Activated CD8-positive, alpha-beta T cell treated with anti-CD3 and anti-CD28 coated beads, Interleukin-2, amount 10 ng/mL, durations not matched to agents 7 days and 5 days (primary cell): ENCODE measurements at regions of chr20 and their contacts with region 1.

Region 1: DNA sequence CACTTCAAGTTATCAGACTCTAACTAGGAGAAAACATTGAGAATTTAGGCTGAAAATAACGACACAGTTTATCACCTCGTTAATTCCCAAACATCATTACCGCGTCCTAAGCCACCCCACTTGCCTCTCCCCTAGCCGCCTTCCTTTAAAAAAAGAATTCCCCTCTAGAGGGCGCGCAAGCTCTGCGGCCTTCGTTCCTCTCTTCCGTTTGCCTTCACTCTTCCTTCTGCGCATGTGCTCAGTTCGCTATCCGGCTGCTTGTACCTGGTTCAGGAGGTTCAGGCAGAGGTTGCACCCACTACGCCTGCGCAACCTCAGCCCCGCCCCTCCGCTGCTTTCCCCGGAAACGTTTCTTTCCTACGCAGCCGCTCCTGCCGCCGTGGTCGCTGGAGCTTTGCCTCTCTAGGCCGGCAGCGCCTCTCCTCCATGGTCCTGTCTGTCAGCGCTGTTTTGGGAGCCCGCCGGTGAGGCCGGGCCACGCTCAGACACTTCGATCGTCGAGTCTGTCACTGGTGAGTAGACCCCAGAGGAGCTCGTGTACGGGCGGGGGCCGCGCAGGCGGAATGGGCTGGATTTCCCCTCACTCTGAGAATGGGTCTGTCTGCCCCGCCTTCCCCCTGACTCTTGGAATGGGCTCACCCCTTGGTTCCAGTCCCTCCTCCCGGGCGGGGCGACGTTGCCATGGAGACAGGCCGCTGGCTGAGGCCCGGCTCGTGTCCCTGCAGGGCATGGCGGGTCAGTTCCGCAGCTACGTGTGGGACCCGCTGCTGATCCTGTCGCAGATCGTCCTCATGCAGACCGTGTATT is at the start of gene SYS1:
- DNase-seq: peak; percentile 99
- ATAC-seq: peak; percentile 91
- H3K4me3 Mint-ChIP-seq: peak within 1 kb of the TSS; percentile 97
- H3K27ac Mint-ChIP-seq: peak within 1 kb of the TSS; percentile 93
- H3K4me1 Mint-ChIP-seq: peaks cover 61% of the 10 kb centered on the region
- H3K27me3 Mint-ChIP-seq: no peaks in the 10 kb centered on the region
- total RNA-seq, gene SYS1: 28.0 to 30.8 TPM

Region 2: DNA sequence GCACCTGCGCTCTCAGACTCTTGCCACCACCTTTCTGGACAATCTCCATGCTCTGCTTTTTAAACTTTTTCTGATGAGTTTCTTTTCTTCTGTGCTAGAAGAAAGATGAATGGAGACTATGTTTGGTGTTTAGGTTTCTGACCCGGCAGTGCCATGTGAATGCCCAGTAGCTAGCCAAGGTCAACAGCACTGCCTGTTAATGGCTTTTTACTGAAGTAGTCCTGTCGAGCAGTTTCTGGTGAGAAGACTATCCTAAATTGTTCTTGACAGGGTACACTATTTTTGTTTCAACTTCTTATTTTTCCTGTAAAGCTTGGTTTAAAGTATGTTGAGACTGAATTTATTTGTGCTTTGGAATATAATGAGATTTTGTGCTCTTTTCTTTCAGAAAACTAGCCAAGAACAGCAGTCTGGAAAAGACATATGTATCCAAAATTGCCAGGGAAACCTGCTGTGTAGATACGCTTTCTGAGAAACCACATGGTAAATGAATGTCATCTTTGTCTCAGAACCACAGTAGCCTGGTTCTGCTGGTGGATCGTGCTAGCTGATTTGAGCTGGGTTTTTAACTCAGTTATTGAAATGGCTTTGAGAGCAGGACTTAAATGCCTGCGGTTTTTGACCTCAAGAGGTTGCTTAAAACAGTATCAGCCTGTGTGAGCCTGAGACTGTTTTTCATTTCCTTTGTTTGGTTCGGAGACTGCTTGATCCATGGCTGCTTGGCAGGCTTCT is 310.1 kb before region 1 on chr20:
- CTCF ChIA-PET with region 1: no interaction called
- POLR2A ChIA-PET with region 1: no interaction called
- DNase-seq: peak; percentile 54
- ATAC-seq: peak; percentile 80
- H3K4me3 Mint-ChIP-seq: peak overlapping the region; percentile 27
- H3K27ac Mint-ChIP-seq: peak overlapping the region; percentile 53
- H3K4me1 Mint-ChIP-seq: peaks cover 78% of the 10 kb centered on the region
- H3K27me3 Mint-ChIP-seq: no peaks in the 10 kb centered on the region

Region 3: DNA sequence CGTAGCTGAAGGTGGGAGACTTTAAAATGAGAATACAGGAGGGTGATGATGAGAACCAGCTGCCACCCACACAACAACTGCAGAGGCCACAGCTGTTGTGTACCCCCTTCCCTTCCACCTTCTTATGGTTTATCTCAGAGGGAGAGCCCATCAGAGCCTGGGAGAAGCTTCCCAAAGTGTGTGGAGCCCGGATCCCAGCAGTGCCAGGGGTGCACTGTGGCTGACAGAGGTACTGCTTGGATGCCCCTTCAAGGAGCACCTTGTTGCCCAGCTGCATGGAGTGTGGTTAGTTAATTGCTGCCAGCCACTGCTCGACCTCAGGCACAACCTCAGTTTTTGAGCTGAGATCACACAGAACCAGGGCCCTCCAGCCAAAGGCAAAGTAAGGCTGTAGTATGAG is 175.3 kb before region 1 on chr20:
- CTCF ChIA-PET with region 1: no interaction called
- POLR2A ChIA-PET with region 1: no interaction called
- DNase-seq: no peak
- ATAC-seq: no peak
- H3K4me3 Mint-ChIP-seq: no peak overlapping the region
- H3K27ac Mint-ChIP-seq: no peak overlapping the region
- H3K4me1 Mint-ChIP-seq: no peaks in the 10 kb centered on the region
- H3K27me3 Mint-ChIP-seq: peaks cover 22% of the 10 kb centered on the region

Region 4: GRCh38 chr20:45347936-45348778 is 14.8 kb before region 1 on chr20 and contains the start of gene SDC4:
- CTCF ChIA-PET with region 1: interaction called, 37 read pairs
- POLR2A ChIA-PET with region 1: interaction called, 8 read pairs
- DNase-seq: peak; percentile 55
- ATAC-seq: peak; percentile 89
- H3K4me3 Mint-ChIP-seq: peak within 1 kb of the TSS; percentile 78
- H3K27ac Mint-ChIP-seq: peak within 1 kb of the TSS; percentile 63
- H3K4me1 Mint-ChIP-seq: peaks cover 37% of the 10 kb centered on the region
- H3K27me3 Mint-ChIP-seq: peaks cover 2% of the 10 kb centered on the region
- total RNA-seq, gene SDC4: 6.6 to 6.7 TPM

Region 5: GRCh38 chr20:45415774-45416637 is 53.0 kb after region 1 on chr20 and contains the start of gene PIGT:
- CTCF ChIA-PET with region 1: interaction called, 33 read pairs
- POLR2A ChIA-PET with region 1: interaction called, 19 read pairs
- DNase-seq: peak; percentile 92
- ATAC-seq: peak; percentile 97
- H3K4me3 Mint-ChIP-seq: peak within 1 kb of the TSS; percentile 93
- H3K27ac Mint-ChIP-seq: peak within 1 kb of the TSS; percentile 90
- H3K4me1 Mint-ChIP-seq: peaks cover 42% of the 10 kb centered on the region
- H3K27me3 Mint-ChIP-seq: peaks cover 2% of the 10 kb centered on the region
- total RNA-seq, gene PIGT: 59.6 to 62.4 TPM